Activated CD8-positive, alpha-beta T cell treated with anti-CD3 and anti-CD28 coated beads, Interleukin-2, amount 10 ng/mL, durations not matched to agents 7 days and 5 days (primary cell): ENCODE measurements at regions of chr6 and their contacts with region 1.

Region 1: GRCh38 chr6:127737009-127737486 is 160.1 kb downstream of the C6orf58 start:
- DNase-seq: peak; percentile 59
- ATAC-seq: peak; percentile 92
- H3K4me3 Mint-ChIP-seq: no peak overlapping the region
- H3K27ac Mint-ChIP-seq: no peak overlapping the region
- H3K4me1 Mint-ChIP-seq: peaks cover 26% of the 10 kb centered on the region
- H3K27me3 Mint-ChIP-seq: no peaks in the 10 kb centered on the region

Region 2: DNA sequence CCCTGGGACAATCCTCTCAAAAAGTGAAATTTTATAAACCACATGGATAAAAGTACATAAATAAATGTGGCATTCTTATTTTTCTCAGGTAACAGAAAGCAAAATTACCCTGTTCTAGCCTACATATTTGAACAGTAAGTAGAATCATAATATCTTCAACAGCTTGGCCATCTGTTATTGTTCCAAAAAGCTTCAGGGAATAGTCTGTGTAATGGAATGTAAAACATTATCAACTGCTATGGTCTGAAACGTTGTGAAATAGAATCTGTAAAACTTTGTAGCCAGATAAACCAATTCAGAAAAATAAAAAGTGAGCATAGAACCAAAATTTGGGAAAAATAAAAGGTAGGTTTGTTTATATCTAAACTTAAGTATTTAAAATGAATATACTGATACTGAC is 49.1 kb after region 1 on chr6:
- CTCF ChIA-PET with region 1: no interaction called
- POLR2A ChIA-PET with region 1: no interaction called
- DNase-seq: no peak
- ATAC-seq: no peak
- H3K4me3 Mint-ChIP-seq: no peak overlapping the region
- H3K27ac Mint-ChIP-seq: no peak overlapping the region
- H3K4me1 Mint-ChIP-seq: peaks cover 34% of the 10 kb centered on the region
- H3K27me3 Mint-ChIP-seq: no peaks in the 10 kb centered on the region

Region 3: DNA sequence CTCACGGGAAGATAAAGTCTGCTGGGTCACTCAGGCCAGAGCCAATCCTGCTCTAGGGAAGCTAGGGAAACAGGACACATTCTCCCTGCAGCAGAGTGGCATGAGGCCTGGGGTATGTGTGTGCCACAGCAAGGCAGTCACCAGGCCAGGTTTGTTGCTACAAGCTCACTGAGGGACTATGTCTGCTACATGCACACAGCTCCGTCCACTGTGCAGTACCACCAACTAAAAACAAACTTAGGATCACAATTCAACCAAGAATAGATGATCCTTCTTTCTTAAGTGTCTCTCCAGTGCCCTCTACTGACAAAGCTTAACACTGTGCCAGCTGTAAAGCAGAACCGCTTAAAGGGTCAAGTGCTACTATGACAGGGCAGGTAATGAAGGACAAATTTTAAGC is 590.8 kb after region 1 on chr6:
- CTCF ChIA-PET with region 1: interaction called, 21 read pairs
- POLR2A ChIA-PET with region 1: no interaction called
- DNase-seq: peak; percentile 57
- ATAC-seq: peak; percentile 74
- H3K4me3 Mint-ChIP-seq: no peak overlapping the region
- H3K27ac Mint-ChIP-seq: no peak overlapping the region
- H3K4me1 Mint-ChIP-seq: peaks cover 6% of the 10 kb centered on the region
- H3K27me3 Mint-ChIP-seq: peaks cover 2% of the 10 kb centered on the region